K562 (cell line): ENCODE measurements at regions of chr15 and their contacts with region 1.

Region 1: DNA sequence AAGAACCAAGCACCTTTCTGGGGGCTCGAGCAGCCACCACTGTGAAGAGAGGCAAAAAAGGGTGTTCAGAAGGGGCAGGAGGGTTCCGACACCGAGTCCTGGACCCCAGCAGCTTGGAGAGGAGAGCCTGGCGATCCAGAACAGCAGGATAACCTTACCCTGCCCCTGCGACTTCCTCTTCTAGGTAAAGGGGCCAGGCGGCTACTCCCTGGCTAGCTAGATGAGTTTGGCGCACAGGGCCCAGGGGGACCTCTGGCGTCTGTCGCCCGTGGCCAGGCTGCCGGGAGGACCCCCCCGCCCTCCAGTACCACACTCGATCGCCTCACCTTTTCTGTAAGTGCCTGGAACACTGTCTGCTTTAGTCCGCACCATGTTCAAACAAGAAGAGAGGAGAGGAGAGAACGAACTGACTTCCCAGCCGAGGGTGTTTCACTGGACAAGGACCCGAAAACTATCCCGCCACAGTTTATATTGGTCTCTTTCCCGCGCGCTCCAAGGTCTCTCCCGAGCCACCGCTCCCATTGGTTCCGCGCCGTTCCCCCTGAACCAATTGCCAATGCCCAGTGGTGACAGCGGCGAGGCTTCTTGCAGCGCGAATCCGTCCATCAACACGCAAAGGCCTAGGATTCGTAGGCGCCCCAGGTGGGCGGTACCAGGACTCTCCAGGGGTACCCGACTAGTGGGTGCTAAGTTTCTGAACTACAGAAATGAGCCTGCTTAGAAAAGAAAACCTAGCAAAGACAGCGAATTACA is at the start of gene PCLAF:
- DNase-seq: peak; percentile 81 to 99 (median 90)
- ATAC-seq: peak; percentile 99
- H3K4me3 ChIP-seq: peak within 1 kb of the TSS; percentile 74
- H3K27ac ChIP-seq: peak within 1 kb of the TSS; percentile 75
- H3K4me1 ChIP-seq: peaks cover 5 to 12% of the 10 kb centered on the region in 2 experiments; a peak in 4 of 5 replicates
- H3K27me3 ChIP-seq: no peaks in the 10 kb centered on the region
- CTCF ChIP-seq: peak in 2 of 3 experiments; percentile 23 to 28; a peak in 4 of 6 replicates
- EP300 ChIP-seq: 0 out of 2 replicates have a peak, but pooled peaks have one; percentile 4
- POLR2A ChIP-seq: peak; percentile 97
- RAD21 ChIP-seq: peak in 1 of 2 experiments; percentile 49; a peak in 2 of 4 replicates
- polyA plus RNA-seq, gene PCLAF: 715 to 881 TPM

Region 2: GRCh38 chr15:64369078-64369607 is 12.0 kb before region 1 on chr15:
- CTCF ChIA-PET with region 1: no interaction called
- POLR2A ChIA-PET with region 1: interaction called, 29 read pairs
- in situ Hi-C with region 1: no loop called
- intact Hi-C with region 1: no loop called
- DNase-seq: no peak
- ATAC-seq: peak; percentile 36; the same call in 2 of the 3 replicates
- H3K4me3 ChIP-seq: no peak overlapping the region
- H3K27ac ChIP-seq: no peak overlapping the region
- H3K4me1 ChIP-seq: no peaks in the 10 kb centered on the region; a peak in 1 of 5 replicates
- H3K27me3 ChIP-seq: no peaks in the 10 kb centered on the region
- CTCF ChIP-seq: no peak
- EP300 ChIP-seq: no peak
- POLR2A ChIP-seq: no peak
- RAD21 ChIP-seq: no peak